Breast epithelium (tissue), 4 donors: ENCODE measurements at regions of chr6 and their contacts with region 1.

Region 1: GRCh38 chr6:119370080-119370479 is 20.5 kb upstream of the MAN1A1 start:
- DNase-seq: no peak
- H3K4me3 ChIP-seq: no peak overlapping the region
- H3K27ac ChIP-seq: no peak overlapping the region
- H3K4me1 ChIP-seq: no peaks in the 10 kb centered on the region
- H3K27me3 ChIP-seq: no peaks in the 10 kb centered on the region
- CTCF ChIP-seq: no peak
- POLR2A ChIP-seq: no peak

Region 2: DNA sequence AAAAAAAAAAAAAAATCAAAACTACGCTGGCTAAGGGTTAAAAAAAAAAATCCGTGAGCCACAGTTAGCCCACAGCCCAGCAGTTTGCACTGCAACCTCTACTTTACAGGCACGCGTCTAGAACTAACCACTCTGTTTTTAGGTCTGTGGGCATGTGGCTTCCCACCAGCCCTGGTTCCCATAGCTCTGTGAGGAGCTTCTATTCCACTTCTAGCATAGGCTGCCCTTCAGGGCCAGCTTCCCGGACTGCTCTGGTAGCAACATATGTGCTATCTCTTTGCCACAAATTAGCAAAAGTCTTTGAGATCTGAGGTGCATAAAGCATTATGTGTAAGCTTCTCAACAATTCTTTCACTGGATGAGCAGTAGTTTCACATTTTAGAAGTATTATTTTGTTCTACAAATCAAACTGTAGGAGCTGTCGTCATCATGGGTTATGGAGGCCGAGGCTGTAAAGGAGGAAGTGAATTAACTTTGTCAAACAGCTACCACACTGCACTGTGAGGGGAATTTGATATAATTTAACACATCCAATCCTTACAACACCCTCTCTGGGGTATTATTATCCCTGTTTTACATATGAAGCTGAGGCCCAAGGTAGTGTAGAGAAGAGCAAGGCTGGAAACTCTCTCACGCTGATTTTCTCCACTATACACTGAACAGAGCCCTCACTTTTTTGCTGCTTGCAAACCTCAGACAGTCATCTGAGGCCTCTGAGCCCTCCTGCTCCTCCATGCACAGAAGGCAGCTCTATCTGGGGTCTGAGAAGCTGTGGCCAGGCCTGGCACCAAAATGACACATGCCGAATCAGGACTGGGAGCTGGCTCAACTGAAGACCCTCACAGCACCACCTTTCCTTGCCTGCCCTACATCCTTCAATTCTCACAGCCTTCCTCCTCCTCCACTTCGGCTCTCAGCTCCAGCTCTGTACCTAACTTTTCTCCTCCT is 55.9 kb before region 1 on chr6:
- intact Hi-C with region 1: loop called (anchors 2 kb)
- DNase-seq: no peak
- H3K4me3 ChIP-seq: no peak overlapping the region
- H3K27ac ChIP-seq: peak overlapping the region; percentile 3 to 39
- H3K4me1 ChIP-seq: no peaks in the 10 kb centered on the region
- H3K27me3 ChIP-seq: no peaks in the 10 kb centered on the region
- CTCF ChIP-seq: no peak
- POLR2A ChIP-seq: no peak

Region 3: GRCh38 chr6:119436583-119436982 is 66.5 kb after region 1 on chr6:
- intact Hi-C with region 1: no loop called
- DNase-seq: no peak
- H3K4me3 ChIP-seq: no peak overlapping the region
- H3K27ac ChIP-seq: no peak overlapping the region
- H3K4me1 ChIP-seq: no peaks in the 10 kb centered on the region
- H3K27me3 ChIP-seq: no peaks in the 10 kb centered on the region
- CTCF ChIP-seq: no peak
- POLR2A ChIP-seq: no peak